G401 (cell line): ENCODE measurements at regions of chr1 and their contacts with region 1.

Region 1: GRCh38 chr1:234730770-234731568 is 121.0 kb upstream of the IRF2BP2 start:
- DNase-seq: no peak

Region 2: GRCh38 chr1:234544087-234544579 is 186.8 kb before region 1 on chr1:
- in situ Hi-C with region 1: no loop called
- DNase-seq: peak; percentile 77

Region 3: DNA sequence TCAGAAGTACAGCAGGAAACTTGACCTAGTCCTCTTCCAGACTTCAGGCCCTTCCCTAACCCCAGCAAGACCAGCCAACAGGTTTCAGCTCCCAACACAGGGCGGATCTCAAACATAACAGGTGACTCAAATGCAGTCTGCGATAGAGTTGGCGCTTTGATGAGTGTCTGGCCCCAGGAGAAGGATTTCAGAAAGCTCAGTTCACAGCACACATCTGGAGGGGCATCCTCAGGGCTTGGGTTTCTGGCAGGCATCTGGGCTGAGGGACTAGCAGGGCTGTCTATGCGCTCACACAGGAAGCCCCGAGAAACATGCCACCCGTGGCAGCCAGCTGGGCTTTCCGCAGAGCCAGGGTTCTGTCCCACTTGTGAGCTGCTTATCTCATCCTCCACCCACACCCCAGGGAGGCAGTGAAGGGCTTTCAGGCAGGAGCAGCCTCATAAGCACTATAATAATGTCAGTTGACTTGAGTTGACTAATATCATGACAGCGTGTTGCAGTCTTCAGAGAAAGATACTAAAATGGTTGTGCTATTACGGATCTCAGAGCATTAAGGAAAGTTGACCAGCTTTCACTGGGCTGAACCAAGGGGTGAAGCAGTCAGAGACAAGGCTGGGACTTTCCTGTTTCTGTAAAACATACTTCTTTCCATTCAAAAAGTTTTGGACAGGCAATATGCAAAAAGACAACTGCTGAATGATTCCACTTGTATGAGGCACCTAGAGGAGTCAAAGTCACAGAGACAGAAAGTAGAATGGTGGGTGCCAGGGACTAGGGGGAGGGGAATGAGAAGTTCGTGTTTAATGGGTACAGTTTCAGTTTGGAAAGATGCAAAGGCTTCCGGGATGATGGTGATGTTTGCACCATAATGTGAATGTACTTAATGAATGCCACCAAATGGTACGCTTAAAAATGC is 112.0 kb after region 1 on chr1:
- in situ Hi-C with region 1: loop called (anchors 25 kb)
- DNase-seq: no peak